Common myeloid progenitor, CD34-positive (primary cell): ENCODE measurements at regions of chr5 and their contacts with region 1.

Region 1: GRCh38 chr5:149268928-149269557 is 2.6 kb upstream of the AFAP1L1 start:
- DNase-seq: peak; percentile 63 to 80 (median 77)
- H3K4me3 ChIP-seq: no peak overlapping the region
- H3K27ac ChIP-seq: no peak overlapping the region
- H3K4me1 ChIP-seq: peaks cover 2 to 25% (median 13%) of the 10 kb centered on the region in 4 experiments
- H3K27me3 ChIP-seq: peaks cover 0 to 23% (median 9%) of the 10 kb centered on the region in 5 experiments

Region 2: GRCh38 chr5:149133795-149134780 is 135.0 kb before region 1 on chr5:
- CTCF ChIA-PET with region 1: interaction called, 40 read pairs
- POLR2A ChIA-PET with region 1: no interaction called
- DNase-seq: no peak
- H3K4me3 ChIP-seq: no peak overlapping the region
- H3K27ac ChIP-seq: no peak overlapping the region
- H3K4me1 ChIP-seq: no peaks in the 10 kb centered on the region
- H3K27me3 ChIP-seq: peaks cover 0 to 6% (median 0%) of the 10 kb centered on the region in 5 experiments

Region 3: GRCh38 chr5:149141224-149141956 is 127.7 kb before region 1 on chr5 and contains the start of gene ABLIM3:
- CTCF ChIA-PET with region 1: interaction called, 40 read pairs
- POLR2A ChIA-PET with region 1: no interaction called
- DNase-seq: peak; percentile 42 to 69 (median 67)
- H3K4me3 ChIP-seq: peak within 1 kb of the TSS; percentile 20 to 77 (median 58)
- H3K27ac ChIP-seq: no peak within 1 kb of the TSS
- H3K4me1 ChIP-seq: peaks cover 0 to 10% (median 8%) of the 10 kb centered on the region in 4 experiments
- H3K27me3 ChIP-seq: peaks cover under 1 to 14% (median 11%) of the 10 kb centered on the region in 5 experiments

Region 4: GRCh38 chr5:149240354-149240998 is 28.6 kb before region 1 on chr5:
- CTCF ChIA-PET with region 1: interaction called, 20 read pairs
- POLR2A ChIA-PET with region 1: no interaction called
- DNase-seq: peak; percentile 85 to 96 (median 93)
- H3K4me3 ChIP-seq: peak overlapping the region in 3 of 7 experiments; percentile 6 to 38 (median 19)
- H3K27ac ChIP-seq: no peak overlapping the region
- H3K4me1 ChIP-seq: peaks cover 0 to 30% (median 23%) of the 10 kb centered on the region in 4 experiments
- H3K27me3 ChIP-seq: no peaks in the 10 kb centered on the region

Region 5: GRCh38 chr5:149247726-149248125 is 21.3 kb before region 1 on chr5:
- CTCF ChIA-PET with region 1: interaction called, 14 read pairs
- POLR2A ChIA-PET with region 1: no interaction called
- DNase-seq: no peak
- H3K4me3 ChIP-seq: no peak overlapping the region
- H3K27ac ChIP-seq: no peak overlapping the region
- H3K4me1 ChIP-seq: no peaks in the 10 kb centered on the region
- H3K27me3 ChIP-seq: no peaks in the 10 kb centered on the region

Region 6: DNA sequence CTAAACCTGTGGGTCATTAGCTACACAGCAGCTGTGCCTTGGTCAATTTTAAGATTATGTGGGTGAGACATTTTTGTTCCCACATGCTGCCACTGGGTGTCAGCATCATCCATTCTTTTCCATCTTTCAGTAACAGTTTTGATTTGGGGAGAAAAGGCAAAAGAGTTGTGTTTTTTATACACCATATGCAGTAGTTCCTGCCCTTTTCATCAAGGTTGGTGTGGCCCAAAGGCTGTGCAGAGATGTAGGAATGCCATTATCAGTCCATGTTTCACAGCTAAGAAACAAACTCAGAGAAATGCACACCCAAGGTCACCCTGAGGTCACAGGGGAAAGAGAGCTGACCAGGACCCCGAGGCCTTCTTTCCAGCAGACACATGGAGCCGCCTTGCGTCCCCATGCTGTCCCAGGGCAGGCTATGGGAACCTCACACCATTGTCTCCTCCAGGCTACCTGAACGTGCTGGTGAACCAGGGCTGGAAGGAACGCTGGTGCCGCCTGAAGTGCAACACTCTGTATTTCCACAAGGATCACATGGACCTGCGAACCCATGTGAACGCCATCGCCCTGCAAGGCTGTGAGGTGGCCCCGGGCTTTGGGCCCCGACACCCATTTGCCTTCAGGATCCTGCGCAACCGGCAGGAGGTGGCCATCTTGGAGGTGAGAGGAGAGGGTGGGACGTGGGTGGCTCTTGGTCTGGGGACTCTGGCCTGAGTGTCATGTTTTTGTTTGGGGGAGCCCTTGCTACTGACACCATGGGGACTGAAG is 48.4 kb after region 1 on chr5:
- CTCF ChIA-PET with region 1: interaction called, 12 read pairs
- POLR2A ChIA-PET with region 1: interaction called, 5 read pairs
- DNase-seq: peak; percentile 43 to 61 (median 54)
- H3K4me3 ChIP-seq: no peak overlapping the region
- H3K27ac ChIP-seq: no peak overlapping the region
- H3K4me1 ChIP-seq: peaks cover 0 to 11% (median 6%) of the 10 kb centered on the region in 4 experiments
- H3K27me3 ChIP-seq: no peaks in the 10 kb centered on the region